CD8-positive, alpha-beta T cell (primary cell): ENCODE measurements at regions of chr11 and their contacts with region 1.

Region 1: DNA sequence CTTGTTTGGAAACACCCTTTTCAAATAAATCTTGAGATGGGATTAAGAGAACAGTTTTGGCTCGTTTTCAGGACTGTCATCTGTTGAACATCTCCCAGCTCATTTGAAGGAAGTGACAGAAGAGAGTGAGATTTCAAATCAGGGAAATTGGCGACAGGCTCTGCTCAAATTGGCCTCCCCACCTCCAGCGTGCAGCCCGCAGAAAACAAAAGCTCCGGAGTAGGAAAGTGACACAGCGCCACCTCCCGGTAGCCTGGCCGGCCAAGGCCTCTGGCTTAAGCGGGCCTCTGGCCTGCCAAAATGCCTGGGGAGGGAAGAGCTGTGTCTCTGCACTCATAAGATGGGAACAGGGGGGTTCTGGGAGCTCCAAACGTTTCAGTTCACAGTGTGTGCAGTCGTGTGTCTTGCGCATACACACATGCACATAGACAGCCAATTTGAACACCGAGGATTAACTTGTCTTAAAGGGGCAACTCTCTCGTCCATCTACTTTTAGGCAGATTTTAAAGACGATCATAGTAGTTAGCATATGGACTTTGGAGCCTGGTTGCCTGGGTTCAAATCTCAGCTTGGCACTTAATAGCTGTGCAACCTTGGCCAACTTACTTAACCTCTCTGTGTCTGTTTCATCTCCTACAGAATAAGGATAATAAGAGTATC is 132.7 kb upstream of the RCN1 start:
- DNase-seq: peak; percentile 3 to 61 (median 38)
- ATAC-seq: no peak
- H3K4me3 ChIP-seq: no peak overlapping the region
- H3K4me3 Mint-ChIP-seq: no peak overlapping the region
- H3K27ac ChIP-seq: no peak overlapping the region
- H3K27ac Mint-ChIP-seq: no peak overlapping the region
- H3K4me1 ChIP-seq: no peaks in the 10 kb centered on the region
- H3K4me1 Mint-ChIP-seq: no peaks in the 10 kb centered on the region
- H3K27me3 ChIP-seq: no peaks in the 10 kb centered on the region
- H3K27me3 Mint-ChIP-seq: no peaks in the 10 kb centered on the region
- CTCF ChIP-seq: peak; percentile 54

Region 2: DNA sequence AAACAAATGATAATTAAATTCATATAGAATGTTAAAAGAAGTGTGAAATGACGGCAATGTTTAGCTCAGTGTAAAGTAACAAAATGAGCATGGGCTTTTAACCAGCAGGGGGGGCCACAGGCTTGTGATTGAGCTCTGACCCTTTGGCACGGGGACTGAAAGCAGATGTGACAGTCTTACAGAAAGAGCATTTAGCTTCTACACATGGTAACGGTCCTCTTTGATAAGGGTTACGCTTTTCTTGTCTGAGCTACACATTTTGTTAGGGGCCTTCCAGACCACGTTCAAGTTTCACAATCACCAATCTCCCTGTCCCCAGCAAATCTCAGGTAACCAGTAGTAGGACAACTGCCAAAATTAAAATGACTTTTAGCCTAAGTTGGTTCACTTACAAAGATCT is 851.1 kb before region 1 on chr11:
- CTCF ChIA-PET with region 1: interaction called, 3 read pairs
- POLR2A ChIA-PET with region 1: no interaction called
- intact Hi-C with region 1: loop called in 1 of 2 experiments (anchors 5 kb)
- DNase-seq: peak in 7 of 9 experiments; percentile 7 to 48 (median 36)
- ATAC-seq: no peak
- H3K4me3 ChIP-seq: no peak overlapping the region
- H3K4me3 Mint-ChIP-seq: no peak overlapping the region
- H3K27ac ChIP-seq: no peak overlapping the region
- H3K27ac Mint-ChIP-seq: no peak overlapping the region
- H3K4me1 ChIP-seq: no peaks in the 10 kb centered on the region
- H3K4me1 Mint-ChIP-seq: no peaks in the 10 kb centered on the region
- H3K27me3 ChIP-seq: no peaks in the 10 kb centered on the region
- H3K27me3 Mint-ChIP-seq: no peaks in the 10 kb centered on the region
- CTCF ChIP-seq: peak; percentile 22

Region 3: GRCh38 chr11:31240338-31240904 is 717.8 kb before region 1 on chr11:
- CTCF ChIA-PET with region 1: interaction called, 18 read pairs
- POLR2A ChIA-PET with region 1: no interaction called
- intact Hi-C with region 1: loop called (anchors 5 kb)
- DNase-seq: peak in 4 of 9 experiments; percentile 4 to 49 (median 22)
- ATAC-seq: no peak
- H3K4me3 ChIP-seq: no peak overlapping the region
- H3K4me3 Mint-ChIP-seq: no peak overlapping the region
- H3K27ac ChIP-seq: no peak overlapping the region
- H3K27ac Mint-ChIP-seq: no peak overlapping the region
- H3K4me1 ChIP-seq: no peaks in the 10 kb centered on the region
- H3K4me1 Mint-ChIP-seq: no peaks in the 10 kb centered on the region
- H3K27me3 ChIP-seq: no peaks in the 10 kb centered on the region
- H3K27me3 Mint-ChIP-seq: peaks cover 4% of the 10 kb centered on the region
- CTCF ChIP-seq: peak; percentile 58

Region 4: DNA sequence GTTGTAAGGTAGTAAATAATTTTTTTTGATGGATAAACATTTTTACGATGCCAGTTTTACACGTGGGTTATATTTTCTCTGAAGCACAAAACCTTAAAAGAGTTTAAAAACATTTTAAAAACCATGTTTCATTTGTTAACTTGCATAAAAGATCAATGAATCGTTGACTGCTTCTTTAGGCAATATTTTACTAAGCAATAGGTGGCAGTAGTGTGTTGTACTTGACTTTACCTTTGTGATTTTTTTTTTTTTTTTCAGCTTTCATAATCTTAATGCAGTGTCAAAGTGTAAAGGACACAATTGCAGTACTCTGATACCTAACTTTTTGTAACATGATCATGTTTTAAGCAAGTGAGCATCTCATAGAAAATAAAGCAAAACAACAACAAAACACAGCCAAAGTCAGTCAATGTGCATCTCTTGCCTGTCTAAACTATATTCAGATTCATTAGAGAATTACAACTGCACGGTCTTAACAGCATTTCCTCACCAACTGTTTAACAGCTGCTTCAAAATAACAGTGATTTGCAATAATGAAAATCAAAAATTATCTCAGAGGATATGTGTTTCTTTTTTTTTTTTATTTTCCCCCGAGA is 560.9 kb before region 1 on chr11:
- CTCF ChIA-PET with region 1: interaction called, 3 read pairs
- POLR2A ChIA-PET with region 1: no interaction called
- intact Hi-C with region 1: loop called (anchors 2 to 10 kb)
- DNase-seq: peak in 2 of 9 experiments; percentile 22 to 48
- ATAC-seq: no peak
- H3K4me3 ChIP-seq: no peak overlapping the region
- H3K4me3 Mint-ChIP-seq: no peak overlapping the region
- H3K27ac ChIP-seq: no peak overlapping the region
- H3K27ac Mint-ChIP-seq: no peak overlapping the region
- H3K4me1 ChIP-seq: no peaks in the 10 kb centered on the region
- H3K4me1 Mint-ChIP-seq: no peaks in the 10 kb centered on the region
- H3K27me3 ChIP-seq: no peaks in the 10 kb centered on the region
- H3K27me3 Mint-ChIP-seq: no peaks in the 10 kb centered on the region
- CTCF ChIP-seq: peak; percentile 61

Region 5: GRCh38 chr11:31487848-31488247 is 470.4 kb before region 1 on chr11:
- CTCF ChIA-PET with region 1: no interaction called
- POLR2A ChIA-PET with region 1: no interaction called
- intact Hi-C with region 1: loop called (anchors 5 kb)
- DNase-seq: peak in 2 of 9 experiments; percentile 35 to 51
- ATAC-seq: no peak
- H3K4me3 ChIP-seq: no peak overlapping the region
- H3K4me3 Mint-ChIP-seq: no peak overlapping the region
- H3K27ac ChIP-seq: no peak overlapping the region
- H3K27ac Mint-ChIP-seq: no peak overlapping the region
- H3K4me1 ChIP-seq: no peaks in the 10 kb centered on the region
- H3K4me1 Mint-ChIP-seq: peaks cover 27% of the 10 kb centered on the region
- H3K27me3 ChIP-seq: no peaks in the 10 kb centered on the region
- H3K27me3 Mint-ChIP-seq: no peaks in the 10 kb centered on the region
- CTCF ChIP-seq: peak; percentile 43

Region 6: DNA sequence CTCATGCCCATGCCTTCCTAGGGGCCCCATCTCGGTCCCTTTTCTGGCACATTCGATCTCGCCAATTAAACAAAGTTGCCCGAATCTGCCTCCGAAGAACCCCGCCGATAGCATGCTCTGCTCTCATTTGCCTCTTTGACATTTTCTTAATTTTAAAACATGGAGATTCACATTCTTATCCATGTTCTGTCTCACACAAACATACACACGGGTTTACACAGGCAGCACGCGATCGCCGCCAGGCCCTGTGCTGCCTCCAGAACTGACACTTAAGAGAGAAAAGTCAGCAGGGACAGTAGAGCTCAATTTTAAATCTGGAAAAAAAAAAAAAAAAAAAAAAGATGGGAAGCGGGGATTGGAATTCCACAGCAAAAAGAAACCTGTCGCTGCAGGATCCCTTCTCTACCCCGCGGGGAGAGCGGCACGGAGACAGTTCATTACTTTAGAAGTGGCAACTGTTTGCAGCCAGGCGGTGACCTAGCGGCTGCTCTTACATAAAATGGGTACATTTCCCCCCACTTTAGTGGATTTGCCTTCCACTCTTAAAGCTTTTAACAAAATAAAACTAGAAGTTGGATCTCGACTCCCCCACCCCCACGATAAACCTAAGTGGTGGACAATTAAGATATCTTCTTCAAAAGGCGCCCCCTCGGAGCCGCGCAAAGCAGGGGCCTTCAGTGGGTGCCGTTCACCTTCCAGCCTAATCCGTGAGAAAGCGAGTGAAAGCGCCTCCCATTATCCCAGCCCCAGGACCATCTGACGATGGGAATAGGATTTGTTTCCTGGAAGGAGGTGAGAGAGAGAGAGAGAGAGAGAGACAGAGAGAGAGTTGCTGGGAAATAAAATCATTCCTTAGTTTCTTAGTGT is 160.8 kb before region 1 on chr11:
- CTCF ChIA-PET with region 1: no interaction called
- POLR2A ChIA-PET with region 1: no interaction called
- intact Hi-C with region 1: no loop called
- DNase-seq: no peak
- ATAC-seq: no peak
- H3K4me3 ChIP-seq: no peak overlapping the region
- H3K4me3 Mint-ChIP-seq: no peak overlapping the region
- H3K27ac ChIP-seq: no peak overlapping the region
- H3K27ac Mint-ChIP-seq: no peak overlapping the region
- H3K4me1 ChIP-seq: peaks cover 23% of the 10 kb centered on the region
- H3K4me1 Mint-ChIP-seq: peaks cover 31% of the 10 kb centered on the region
- H3K27me3 ChIP-seq: peaks cover 27 to 38% of the 10 kb centered on the region in 2 experiments
- H3K27me3 Mint-ChIP-seq: peaks cover 68% of the 10 kb centered on the region
- CTCF ChIP-seq: no peak

Region 7: GRCh38 chr11:31977343-31977742 is 19.1 kb after region 1 on chr11:
- CTCF ChIA-PET with region 1: no interaction called
- POLR2A ChIA-PET with region 1: no interaction called
- intact Hi-C with region 1: no loop called
- DNase-seq: no peak
- ATAC-seq: no peak
- H3K4me3 ChIP-seq: no peak overlapping the region
- H3K4me3 Mint-ChIP-seq: no peak overlapping the region
- H3K27ac ChIP-seq: no peak overlapping the region
- H3K27ac Mint-ChIP-seq: no peak overlapping the region
- H3K4me1 ChIP-seq: no peaks in the 10 kb centered on the region
- H3K4me1 Mint-ChIP-seq: no peaks in the 10 kb centered on the region
- H3K27me3 ChIP-seq: peaks cover 0 to 4% of the 10 kb centered on the region in 2 experiments
- H3K27me3 Mint-ChIP-seq: peaks cover 37% of the 10 kb centered on the region
- CTCF ChIP-seq: no peak